Cardiac septum (tissue), 1 donor: ENCODE measurements at regions of chr20 and their contacts with region 1.

Region 1: DNA sequence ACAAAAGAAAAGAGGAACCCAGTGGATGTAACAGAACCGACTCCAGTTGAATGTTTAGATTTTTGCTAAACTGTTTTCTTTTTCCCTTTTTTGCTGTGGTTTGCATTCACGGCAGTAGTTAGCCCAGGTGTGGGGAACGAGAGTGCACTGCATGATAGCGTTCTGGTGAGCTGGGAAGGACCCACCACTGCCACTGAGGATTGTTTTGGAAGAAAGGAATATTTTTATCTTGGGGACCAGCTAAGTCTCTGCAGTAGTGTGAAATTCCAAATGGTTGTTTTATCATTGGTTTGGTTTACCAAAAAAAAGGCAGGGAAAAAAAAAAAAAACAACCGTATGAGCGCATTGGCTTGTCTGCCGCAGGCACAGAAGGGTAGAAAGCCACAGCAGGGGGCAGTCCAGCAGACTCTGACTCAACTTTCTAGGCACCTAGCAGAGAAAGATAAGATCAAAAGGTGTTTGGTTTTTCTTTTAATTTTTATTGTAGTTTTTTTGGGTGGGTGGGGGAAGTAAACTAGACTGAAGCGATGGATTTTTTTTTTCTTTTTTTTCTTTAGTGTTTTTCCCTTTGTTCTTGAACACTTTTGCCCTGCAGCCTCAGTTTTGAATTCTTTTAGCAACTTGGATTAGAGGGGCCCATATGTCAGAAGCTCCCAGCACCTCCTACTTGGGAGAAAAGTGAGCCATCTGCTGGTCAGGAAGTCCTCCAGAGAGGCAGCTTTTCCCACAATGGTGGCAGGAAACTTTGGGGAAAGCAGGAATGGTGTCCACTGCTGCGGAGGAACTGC is 13.5 kb upstream of the RAB5IF start:
- DNase-seq: no peak

Region 2: GRCh38 chr20:36214684-36215256 is 377.3 kb before region 1 on chr20:
- intact Hi-C with region 1: loop called (anchors 10 kb)
- DNase-seq: no peak

Region 3: GRCh38 chr20:36658300-36658699 is 66.3 kb after region 1 on chr20:
- intact Hi-C with region 1: no loop called
- DNase-seq: no peak